Activated T-helper 2 cell treated with anti-CD3 and anti-CD28 coated beads, Interferon-gamma antibody, Interleukin-2, Interleukin-4, amounts not matched to agents 10 μg/mL and 5 μg/mL and 100 μg/mL, durations not matched to agents 14 hours and 24 hours and 36 hours (primary cell): ENCODE measurements at regions of chr2 and their contacts with region 1.

Region 1: DNA sequence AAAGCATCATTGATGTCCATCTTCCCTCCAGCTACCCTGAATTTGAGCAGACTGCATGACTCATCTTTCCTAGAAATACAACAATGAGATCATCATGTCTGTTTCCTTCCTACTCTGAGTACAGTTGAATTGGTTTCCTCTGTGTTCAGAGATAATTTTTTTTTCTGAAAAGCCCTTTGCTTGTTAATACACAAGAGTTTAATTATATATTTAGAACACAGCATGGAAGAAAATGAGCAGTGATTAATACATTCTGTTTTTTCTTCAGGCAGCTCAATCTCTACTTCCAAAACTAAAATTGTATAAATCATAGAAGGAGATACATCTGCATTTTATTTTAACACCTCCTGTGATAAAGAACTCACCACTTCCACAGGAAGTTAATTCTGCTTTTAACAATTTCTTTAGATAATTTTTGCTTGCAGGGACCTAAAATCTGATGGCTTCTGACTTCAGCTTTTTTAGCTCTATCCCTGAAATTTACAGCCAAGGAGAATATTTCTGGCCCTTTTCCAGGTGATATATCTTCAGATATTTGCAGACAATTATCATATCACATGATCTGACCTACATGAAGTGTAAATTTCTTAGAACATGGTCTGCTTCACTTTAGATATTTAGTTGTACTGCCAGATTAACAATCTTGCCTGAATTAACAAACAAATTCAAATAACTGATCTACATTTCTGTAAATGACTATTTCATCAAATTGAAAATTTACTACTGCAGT is 249.0 kb downstream of the TRIB2 start:
- DNase-seq: no peak
- H3K4me3 Mint-ChIP-seq: peak overlapping the region; percentile 2
- H3K27ac Mint-ChIP-seq: peak overlapping the region; percentile 48
- H3K4me1 Mint-ChIP-seq: peaks cover 49% of the 10 kb centered on the region
- H3K27me3 Mint-ChIP-seq: peaks cover 11% of the 10 kb centered on the region

Region 2: GRCh38 chr2:12430407-12431133 is 535.1 kb before region 1 on chr2:
- intact Hi-C with region 1: loop called (anchors 5 kb)
- DNase-seq: no peak
- H3K4me3 Mint-ChIP-seq: peak overlapping the region; percentile 18
- H3K27ac Mint-ChIP-seq: peak overlapping the region; percentile 63
- H3K4me1 Mint-ChIP-seq: peaks cover 29% of the 10 kb centered on the region
- H3K27me3 Mint-ChIP-seq: no peaks in the 10 kb centered on the region